ENCODE measurements at regions of chr6 and their contacts with region 1.

Region 1: GRCh38 chr6:39102071-39102820 is 12.7 kb downstream of the SAYSD1 start:
- DNase-seq: peak; percentile 79
- ATAC-seq: peak; percentile 99
- H3K4me3 Mint-ChIP-seq: no peak overlapping the region
- H3K27ac Mint-ChIP-seq: no peak overlapping the region
- H3K4me1 Mint-ChIP-seq: peaks cover 6% of the 10 kb centered on the region; the same call in 1 of the 2 replicates
- H3K27me3 Mint-ChIP-seq: no peaks in the 10 kb centered on the region
- CTCF ChIP-seq: peak; percentile 60

Region 2: DNA sequence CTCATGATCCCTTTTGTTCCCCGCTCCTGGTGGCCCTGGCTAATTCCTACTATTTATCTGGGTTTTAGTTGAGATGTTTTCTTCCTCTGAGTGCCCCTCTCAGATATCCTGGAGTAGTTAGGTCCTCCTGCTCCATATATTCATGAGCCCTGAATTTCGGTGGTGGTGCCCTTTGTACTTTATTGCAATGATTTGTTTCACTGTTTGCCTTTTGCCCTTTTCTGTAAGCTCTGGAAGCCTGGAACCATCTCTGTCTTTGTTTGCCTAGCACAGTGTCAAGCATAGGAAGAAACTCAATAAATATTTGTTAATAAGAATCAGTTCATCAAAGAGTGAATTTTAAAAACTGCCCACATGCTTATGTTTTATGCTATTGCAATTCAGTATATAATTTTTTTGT is 242.2 kb before region 1 on chr6:
- CTCF ChIA-PET with region 1: no interaction called
- POLR2A ChIA-PET with region 1: no interaction called
- DNase-seq: no peak
- ATAC-seq: no peak
- H3K4me3 Mint-ChIP-seq: no peak overlapping the region
- H3K27ac Mint-ChIP-seq: no peak overlapping the region
- H3K4me1 Mint-ChIP-seq: no peaks in the 10 kb centered on the region
- H3K27me3 Mint-ChIP-seq: no peaks in the 10 kb centered on the region; the same call in 1 of the 2 replicates
- CTCF ChIP-seq: no peak

Region 3: DNA sequence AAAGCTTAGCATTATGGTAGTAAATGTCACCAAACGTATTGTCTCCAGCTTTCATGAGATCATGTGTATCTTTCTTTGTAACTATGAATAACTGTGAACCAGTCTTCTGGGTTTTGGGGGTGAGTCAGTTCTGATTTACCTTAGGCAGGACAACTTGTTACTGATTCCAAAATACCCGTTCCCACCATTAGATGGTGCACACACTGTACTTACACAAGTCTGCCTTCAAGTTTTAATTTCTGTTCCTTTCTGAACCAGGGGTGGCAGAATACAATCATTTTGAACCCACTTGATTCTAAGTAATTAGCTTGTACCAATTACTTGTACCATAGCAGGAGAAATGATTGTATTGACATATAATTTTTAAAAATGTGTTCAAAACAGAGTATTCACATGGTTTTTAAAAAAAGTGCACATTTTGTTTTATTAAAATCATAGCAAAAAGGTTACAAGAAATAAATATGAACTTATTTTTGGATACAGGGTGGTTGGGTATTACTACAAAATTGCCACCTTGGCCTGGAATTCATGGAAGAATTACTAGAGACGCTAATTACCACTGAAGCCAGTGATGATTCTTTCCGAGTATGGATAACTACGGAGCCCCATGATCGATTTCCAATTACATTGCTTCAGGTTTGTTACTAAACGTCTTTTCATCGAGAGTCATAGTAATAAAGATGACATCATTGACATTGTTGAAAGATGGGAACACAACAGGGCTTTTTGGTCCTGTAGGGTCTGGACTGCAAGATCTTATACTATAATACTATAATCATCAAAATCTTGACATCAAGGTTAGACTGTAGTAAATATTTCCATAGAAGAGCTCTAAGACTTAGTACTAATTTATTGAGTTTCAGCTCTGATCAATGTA is 128.8 kb before region 1 on chr6:
- CTCF ChIA-PET with region 1: interaction called, 32 read pairs
- POLR2A ChIA-PET with region 1: no interaction called
- DNase-seq: no peak
- ATAC-seq: peak; percentile 52
- H3K4me3 Mint-ChIP-seq: no peak overlapping the region
- H3K27ac Mint-ChIP-seq: no peak overlapping the region
- H3K4me1 Mint-ChIP-seq: peaks cover 23% of the 10 kb centered on the region
- H3K27me3 Mint-ChIP-seq: no peaks in the 10 kb centered on the region
- CTCF ChIP-seq: no peak

Region 4: GRCh38 chr6:39003072-39003471 is 99.2 kb before region 1 on chr6:
- CTCF ChIA-PET with region 1: interaction called, 180 read pairs
- POLR2A ChIA-PET with region 1: no interaction called
- DNase-seq: peak; percentile 52
- ATAC-seq: peak; percentile 76
- H3K4me3 Mint-ChIP-seq: no peak overlapping the region
- H3K27ac Mint-ChIP-seq: no peak overlapping the region
- H3K4me1 Mint-ChIP-seq: no peaks in the 10 kb centered on the region
- H3K27me3 Mint-ChIP-seq: peaks cover 8% of the 10 kb centered on the region
- CTCF ChIP-seq: 0 out of 2 replicates have a peak, but pooled peaks have one; percentile 32

Region 5: DNA sequence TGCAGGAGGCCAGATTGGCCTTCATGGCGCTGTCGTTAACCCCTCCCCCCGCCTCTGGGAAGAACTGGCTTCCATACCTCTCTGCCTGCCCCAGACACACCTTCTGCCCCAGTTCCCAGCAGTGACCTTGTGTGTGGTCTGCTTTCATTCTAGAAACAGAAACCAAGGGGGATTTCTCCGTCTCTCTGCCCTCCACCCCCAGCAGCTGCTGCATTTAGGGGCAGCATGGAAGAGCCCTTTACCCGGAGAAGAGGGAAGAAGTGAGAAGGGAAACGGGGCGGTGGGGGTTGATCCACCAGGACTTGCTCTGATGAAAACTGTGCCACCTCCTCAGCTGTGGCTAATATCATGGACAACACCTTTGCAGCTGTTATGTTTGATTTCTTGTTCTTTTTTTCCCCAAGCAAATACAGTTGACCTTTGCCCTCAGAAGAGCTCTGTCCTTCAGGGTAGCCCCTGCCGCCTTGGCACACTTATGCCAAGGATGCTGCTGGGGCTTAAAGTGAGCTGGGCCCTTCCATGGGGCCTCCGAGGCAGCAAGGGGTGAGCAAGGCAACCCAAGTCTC is 47.6 kb before region 1 on chr6:
- CTCF ChIA-PET with region 1: interaction called, 14 read pairs
- POLR2A ChIA-PET with region 1: no interaction called
- DNase-seq: peak; percentile 30
- ATAC-seq: peak; percentile 70
- H3K4me3 Mint-ChIP-seq: no peak overlapping the region
- H3K27ac Mint-ChIP-seq: no peak overlapping the region
- H3K4me1 Mint-ChIP-seq: peaks cover 17% of the 10 kb centered on the region
- H3K27me3 Mint-ChIP-seq: peaks cover 17% of the 10 kb centered on the region
- CTCF ChIP-seq: no peak

Region 6: DNA sequence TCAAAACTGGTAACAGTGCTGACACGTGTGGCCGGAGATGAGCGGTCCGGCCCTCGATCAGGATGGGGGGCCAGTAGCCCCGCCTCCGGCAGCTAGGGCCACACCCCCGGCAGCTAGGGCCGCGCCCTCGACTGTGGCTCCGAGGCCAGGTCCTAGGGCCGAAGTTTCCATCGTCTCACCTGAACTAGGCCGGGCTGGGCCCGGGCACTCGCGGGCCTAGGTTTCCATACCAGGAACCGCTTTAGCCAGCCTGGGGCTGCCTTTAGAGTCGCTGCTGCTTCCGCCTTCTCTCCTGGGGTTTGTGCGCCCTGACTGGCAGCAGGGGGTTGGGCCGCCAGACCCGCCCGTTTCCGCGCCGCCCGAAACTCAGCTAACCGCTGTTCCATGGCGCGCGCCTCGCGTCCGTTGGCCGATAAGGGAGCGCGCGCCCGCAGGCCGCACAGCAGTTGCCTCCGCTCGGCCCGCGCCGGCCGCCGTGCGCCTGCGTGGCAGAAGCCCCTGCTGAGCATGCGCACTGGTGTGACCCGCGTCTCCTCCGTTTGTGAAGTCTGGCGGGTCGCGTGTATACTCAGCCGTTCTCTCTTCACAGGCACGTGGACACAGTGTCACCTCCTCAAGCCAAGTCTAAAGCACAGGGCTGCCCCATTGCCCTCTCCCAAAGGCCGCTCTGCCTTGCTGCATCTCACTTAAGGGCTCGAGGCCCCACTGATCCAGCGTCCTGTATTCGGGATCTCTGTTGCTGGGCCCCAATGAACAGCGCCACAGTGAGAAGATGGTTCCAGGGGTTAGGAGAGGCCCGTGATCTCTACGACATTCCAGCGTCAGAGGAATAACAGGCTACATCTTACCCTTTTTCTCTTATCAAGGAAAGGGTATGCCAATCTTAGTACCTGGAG is 12.7 kb after region 1 on chr6 and contains the start of gene SAYSD1:
- CTCF ChIA-PET with region 1: interaction called, 33 read pairs
- POLR2A ChIA-PET with region 1: interaction called, 3 read pairs
- DNase-seq: peak; percentile 92
- ATAC-seq: peak; percentile 95
- H3K4me3 Mint-ChIP-seq: peak within 1 kb of the TSS; percentile 86
- H3K27ac Mint-ChIP-seq: peak within 1 kb of the TSS; percentile 97
- H3K4me1 Mint-ChIP-seq: peaks cover 15% of the 10 kb centered on the region
- H3K27me3 Mint-ChIP-seq: peaks cover 7% of the 10 kb centered on the region
- CTCF ChIP-seq: no peak
- total RNA-seq, gene SAYSD1: 6.9 to 7.7 TPM (median 7.4 TPM) in 3 replicates

Region 7: DNA sequence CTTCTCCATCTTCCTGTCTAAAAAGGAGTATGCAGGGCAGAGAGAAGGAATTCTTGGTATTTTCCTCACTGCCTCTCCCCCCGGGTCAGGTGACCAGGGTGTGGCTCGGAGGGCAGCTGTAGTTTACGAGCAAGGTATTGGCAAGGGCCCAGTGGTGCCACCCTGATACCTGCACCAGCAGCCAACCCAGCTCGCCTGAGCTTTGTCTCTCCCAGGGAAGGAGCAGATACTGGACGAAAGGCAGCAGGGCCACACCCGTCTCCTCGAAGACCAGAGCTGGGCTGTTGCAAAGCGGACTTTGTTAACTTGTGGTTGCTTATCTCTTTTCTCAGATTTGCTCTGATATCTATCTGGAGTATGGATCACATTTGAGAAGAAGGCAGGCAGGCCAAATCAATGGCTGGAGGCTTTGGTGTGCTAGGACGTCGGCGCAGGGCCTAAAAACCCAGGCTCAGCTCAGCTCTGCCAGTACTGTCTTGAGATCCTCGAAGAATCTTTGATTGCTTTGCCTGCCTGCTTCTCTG is 101.7 kb after region 1 on chr6:
- CTCF ChIA-PET with region 1: no interaction called
- POLR2A ChIA-PET with region 1: no interaction called
- DNase-seq: peak; percentile 33
- ATAC-seq: peak; percentile 29
- H3K4me3 Mint-ChIP-seq: no peak overlapping the region
- H3K27ac Mint-ChIP-seq: peak overlapping the region; percentile 97
- H3K4me1 Mint-ChIP-seq: peaks cover 82% of the 10 kb centered on the region
- H3K27me3 Mint-ChIP-seq: no peaks in the 10 kb centered on the region
- CTCF ChIP-seq: no peak

Region 8: GRCh38 chr6:39309942-39310531 is 207.8 kb after region 1 on chr6:
- CTCF ChIA-PET with region 1: interaction called, 13 read pairs
- POLR2A ChIA-PET with region 1: no interaction called
- DNase-seq: peak; percentile 88
- ATAC-seq: peak; percentile 60
- H3K4me3 Mint-ChIP-seq: no peak overlapping the region
- H3K27ac Mint-ChIP-seq: no peak overlapping the region
- H3K4me1 Mint-ChIP-seq: peaks cover 2% of the 10 kb centered on the region
- H3K27me3 Mint-ChIP-seq: peaks cover 45% of the 10 kb centered on the region
- CTCF ChIP-seq: peak; percentile 86

Measured in WTC11 (cell line).